ENCODE measurements at regions of chr1 and their contacts with region 1.

Region 1: GRCh38 chr1:178684542-178685000 is 40.5 kb upstream of the RALGPS2 start:
- DNase-seq: peak; percentile 93
- H3K4me3 ChIP-seq: no peak overlapping the region
- H3K27ac ChIP-seq: peak overlapping the region; percentile 98
- H3K4me1 ChIP-seq: peaks cover 43% of the 10 kb centered on the region
- H3K27me3 ChIP-seq: no peaks in the 10 kb centered on the region
- CTCF ChIP-seq: no peak
- POLR2A ChIP-seq: peak; percentile 47

Region 2: GRCh38 chr1:178612261-178612660 is 72.3 kb before region 1 on chr1:
- CTCF ChIA-PET with region 1: no interaction called
- POLR2A ChIA-PET with region 1: interaction called, 8 read pairs
- dilution Hi-C with region 1: no loop called
- intact Hi-C with region 1: loop called (anchors 5 kb)
- DNase-seq: peak; percentile 50
- H3K4me3 ChIP-seq: no peak overlapping the region
- H3K27ac ChIP-seq: peak overlapping the region; percentile 53
- H3K4me1 ChIP-seq: peaks cover 11% of the 10 kb centered on the region
- H3K27me3 ChIP-seq: no peaks in the 10 kb centered on the region
- CTCF ChIP-seq: no peak
- POLR2A ChIP-seq: no peak

Region 3: DNA sequence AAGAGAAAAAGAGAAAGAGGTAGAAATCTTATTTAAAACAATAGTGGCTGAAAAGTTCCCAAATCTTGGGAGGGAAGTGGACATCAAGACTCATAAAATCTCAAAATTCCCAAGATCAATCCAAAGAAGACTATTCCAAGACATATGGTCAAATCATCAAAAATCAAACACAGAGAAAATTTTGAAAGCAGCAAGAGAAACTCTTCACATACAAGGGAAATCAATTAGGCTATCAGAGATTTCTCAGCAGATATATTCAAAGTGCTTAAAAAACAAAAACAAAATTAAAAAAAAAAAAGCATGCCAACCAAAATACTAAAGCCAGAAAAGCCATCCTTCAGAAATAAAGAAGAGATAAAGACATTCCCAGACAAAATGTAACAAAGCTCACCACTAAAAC is 12.1 kb before region 1 on chr1:
- CTCF ChIA-PET with region 1: no interaction called
- POLR2A ChIA-PET with region 1: no interaction called
- dilution Hi-C with region 1: no loop called
- intact Hi-C with region 1: no loop called
- DNase-seq: no peak
- H3K4me3 ChIP-seq: no peak overlapping the region
- H3K27ac ChIP-seq: no peak overlapping the region
- H3K4me1 ChIP-seq: no peaks in the 10 kb centered on the region
- H3K27me3 ChIP-seq: no peaks in the 10 kb centered on the region
- CTCF ChIP-seq: no peak
- POLR2A ChIP-seq: no peak

Region 4: GRCh38 chr1:178725603-178726517 is 41.3 kb after region 1 on chr1:
- CTCF ChIA-PET with region 1: interaction called, 15 read pairs
- POLR2A ChIA-PET with region 1: no interaction called
- dilution Hi-C with region 1: no loop called
- intact Hi-C with region 1: loop called (anchors 1 kb)
- DNase-seq: peak; percentile 86
- H3K4me3 ChIP-seq: peak overlapping the region; percentile 68 to 94 (median 92)
- H3K27ac ChIP-seq: peak overlapping the region; percentile 68
- H3K4me1 ChIP-seq: peaks cover 28% of the 10 kb centered on the region
- H3K27me3 ChIP-seq: no peaks in the 10 kb centered on the region
- CTCF ChIP-seq: peak in 1 of 2 donors; percentile 25
- POLR2A ChIP-seq: peak; percentile 49